ENCODE measurements at regions of chr7 and their contacts with region 1.

Region 1: DNA sequence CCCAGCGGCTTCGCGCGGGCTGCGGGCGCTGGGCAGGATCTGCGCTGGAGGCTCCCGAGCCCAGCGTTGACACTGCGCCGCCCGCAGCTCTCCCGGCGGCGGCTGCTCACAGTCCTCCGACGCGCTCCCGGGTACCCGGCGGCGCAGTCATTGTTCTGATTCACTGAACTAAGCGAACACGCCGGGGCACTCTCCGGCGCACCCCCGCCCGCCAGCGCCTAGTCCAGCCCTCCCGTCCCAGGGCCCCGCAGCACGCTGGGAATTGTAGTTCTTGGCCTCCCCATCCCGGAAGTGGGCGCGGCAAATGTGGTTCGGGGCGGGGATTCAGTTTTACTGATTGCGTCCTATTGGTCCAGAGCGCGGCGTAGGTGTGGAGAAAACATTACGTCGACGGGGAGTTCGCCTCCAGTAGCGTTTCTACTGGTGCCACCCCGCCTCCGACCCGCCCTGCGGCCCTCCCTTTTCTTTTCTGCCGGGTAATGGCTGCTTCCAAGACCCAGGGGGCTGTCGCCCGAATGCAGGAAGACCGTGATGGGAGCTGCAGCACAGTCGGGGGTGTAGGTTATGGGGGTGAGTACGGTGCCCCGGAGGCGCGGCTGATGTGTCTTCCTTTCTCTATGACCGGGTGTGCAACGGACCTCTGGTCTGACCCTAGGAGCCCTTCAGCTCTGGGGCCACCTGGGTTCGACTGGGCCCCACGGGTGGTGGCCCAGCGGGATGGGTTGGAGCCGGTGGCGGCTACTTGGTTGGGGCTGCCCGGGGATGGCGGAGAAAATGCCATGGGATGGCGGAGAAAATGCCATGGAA is at the starts of genes DOCK4 and ZNF277:
- DNase-seq: peak; percentile 100
- H3K4me3 ChIP-seq: peak within 1 kb of the TSS; percentile 96
- H3K27ac ChIP-seq: peak within 1 kb of the TSS; percentile 85
- H3K4me1 ChIP-seq: peaks cover 17% of the 10 kb centered on the region
- H3K27me3 ChIP-seq: no peaks in the 10 kb centered on the region
- CTCF ChIP-seq: no peak
- total RNA-seq, gene DOCK4: 21.0 and 28.5 TPM in 2 replicates
- total RNA-seq, gene ZNF277: 17.7 and 21.0 TPM in 2 replicates

Region 2: GRCh38 chr7:111752022-111752582 is 454.3 kb before region 1 on chr7:
- CTCF ChIA-PET with region 1: no interaction called
- POLR2A ChIA-PET with region 1: no interaction called
- intact Hi-C with region 1: loop called (anchors 5 kb)
- DNase-seq: peak; percentile 75
- H3K4me3 ChIP-seq: no peak overlapping the region
- H3K27ac ChIP-seq: no peak overlapping the region
- H3K4me1 ChIP-seq: peaks cover 10% of the 10 kb centered on the region
- H3K27me3 ChIP-seq: no peaks in the 10 kb centered on the region
- CTCF ChIP-seq: peak; percentile 94

Region 3: GRCh38 chr7:111987115-111987826 is 219.2 kb before region 1 on chr7:
- CTCF ChIA-PET with region 1: no interaction called
- POLR2A ChIA-PET with region 1: no interaction called
- intact Hi-C with region 1: loop called (anchors 10 kb)
- DNase-seq: peak; percentile 62
- H3K4me3 ChIP-seq: no peak overlapping the region
- H3K27ac ChIP-seq: peak overlapping the region; percentile 51
- H3K4me1 ChIP-seq: peaks cover 13% of the 10 kb centered on the region
- H3K27me3 ChIP-seq: no peaks in the 10 kb centered on the region
- CTCF ChIP-seq: no peak

Region 4: GRCh38 chr7:112080441-112080840 is 126.0 kb before region 1 on chr7:
- CTCF ChIA-PET with region 1: no interaction called
- POLR2A ChIA-PET with region 1: interaction called, 6 read pairs
- intact Hi-C with region 1: loop called (anchors 5 kb)
- DNase-seq: peak; percentile 64
- H3K4me3 ChIP-seq: no peak overlapping the region
- H3K27ac ChIP-seq: peak overlapping the region; percentile 79
- H3K4me1 ChIP-seq: peaks cover 63% of the 10 kb centered on the region
- H3K27me3 ChIP-seq: no peaks in the 10 kb centered on the region
- CTCF ChIP-seq: no peak

Region 5: GRCh38 chr7:112390167-112390566 is 183.7 kb after region 1 on chr7:
- CTCF ChIA-PET with region 1: no interaction called
- POLR2A ChIA-PET with region 1: no interaction called
- intact Hi-C with region 1: loop called (anchors 2 kb)
- DNase-seq: no peak
- H3K4me3 ChIP-seq: no peak overlapping the region
- H3K27ac ChIP-seq: no peak overlapping the region
- H3K4me1 ChIP-seq: peaks cover 4% of the 10 kb centered on the region
- H3K27me3 ChIP-seq: no peaks in the 10 kb centered on the region
- CTCF ChIP-seq: no peak